ENCODE measurements at regions of chr6 and their contacts with region 1.

Region 1: GRCh38 chr6:18503593-18504231 is 116.6 kb downstream of the RNF144B start:
- DNase-seq: peak; percentile 78 to 89 (median 84)
- H3K4me3 ChIP-seq: peak overlapping the region in 1 of 7 experiments; percentile 20
- H3K27ac ChIP-seq: no peak overlapping the region
- H3K4me1 ChIP-seq: peaks cover 0 to 27% (median 22%) of the 10 kb centered on the region in 4 experiments
- H3K27me3 ChIP-seq: no peaks in the 10 kb centered on the region

Region 2: GRCh38 chr6:18323935-18324705 is 179.6 kb before region 1 on chr6:
- CTCF ChIA-PET with region 1: interaction called, 227 read pairs
- POLR2A ChIA-PET with region 1: interaction called, 3 read pairs
- DNase-seq: peak; percentile 54 to 75 (median 69)
- H3K4me3 ChIP-seq: no peak overlapping the region
- H3K27ac ChIP-seq: no peak overlapping the region
- H3K4me1 ChIP-seq: peaks cover 10 to 40% (median 21%) of the 10 kb centered on the region in 4 experiments
- H3K27me3 ChIP-seq: no peaks in the 10 kb centered on the region

Region 3: DNA sequence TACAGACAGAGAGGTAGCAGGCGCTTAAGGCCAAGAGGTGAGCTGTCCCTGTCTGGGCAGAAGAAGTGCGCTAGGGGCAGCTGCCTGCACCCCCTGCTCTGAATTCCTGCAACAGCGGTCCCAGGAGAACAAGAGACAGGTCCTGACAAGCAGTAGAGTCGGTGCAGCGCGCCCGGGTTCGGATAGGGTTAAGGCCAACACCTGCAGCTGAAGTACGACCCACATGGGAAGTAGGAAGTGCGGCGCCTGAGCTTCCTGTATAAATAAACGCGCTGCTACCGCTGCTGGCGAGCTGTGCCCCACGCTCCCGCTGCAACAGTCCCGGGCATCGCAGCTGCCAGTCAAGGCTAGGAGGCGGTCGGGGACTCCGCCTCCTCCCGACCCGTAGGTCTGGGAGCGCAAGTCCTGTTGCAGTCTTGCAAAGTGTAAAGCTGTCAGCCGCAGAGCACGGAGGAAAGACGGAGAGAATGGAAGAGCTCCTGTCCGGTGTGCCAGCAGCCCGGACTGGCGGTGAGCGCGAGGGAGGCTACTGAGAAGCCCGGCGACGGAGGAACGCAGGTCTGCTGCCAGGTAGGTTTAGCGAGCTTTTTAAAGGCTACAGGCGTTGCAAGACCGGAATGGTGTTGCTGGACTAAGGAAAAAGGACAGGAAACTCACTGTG is 116.5 kb before region 1 on chr6 and contains the start of gene RNF144B:
- CTCF ChIA-PET with region 1: interaction called, 10 read pairs
- POLR2A ChIA-PET with region 1: no interaction called
- DNase-seq: peak; percentile 82 to 91 (median 86)
- H3K4me3 ChIP-seq: peak within 1 kb of the TSS; percentile 75 to 100 (median 93)
- H3K27ac ChIP-seq: peak within 1 kb of the TSS; percentile 59 to 82
- H3K4me1 ChIP-seq: peaks cover 11 to 41% (median 26%) of the 10 kb centered on the region in 4 experiments
- H3K27me3 ChIP-seq: no peaks in the 10 kb centered on the region